Sigmoid colon (tissue), 7 donors: ENCODE measurements at regions of chr17 and their contacts with region 1.

Region 1: GRCh38 chr17:61700252-61700651 is 109.2 kb upstream of the NACA2 start:
- DNase-seq: no peak
- H3K4me3 ChIP-seq: no peak overlapping the region
- H3K27ac ChIP-seq: no peak overlapping the region
- H3K4me1 ChIP-seq: no peaks in the 10 kb centered on the region
- H3K27me3 ChIP-seq: no peaks in the 10 kb centered on the region
- CTCF ChIP-seq: no peak
- EP300 ChIP-seq: no peak
- POLR2A ChIP-seq: no peak

Region 2: DNA sequence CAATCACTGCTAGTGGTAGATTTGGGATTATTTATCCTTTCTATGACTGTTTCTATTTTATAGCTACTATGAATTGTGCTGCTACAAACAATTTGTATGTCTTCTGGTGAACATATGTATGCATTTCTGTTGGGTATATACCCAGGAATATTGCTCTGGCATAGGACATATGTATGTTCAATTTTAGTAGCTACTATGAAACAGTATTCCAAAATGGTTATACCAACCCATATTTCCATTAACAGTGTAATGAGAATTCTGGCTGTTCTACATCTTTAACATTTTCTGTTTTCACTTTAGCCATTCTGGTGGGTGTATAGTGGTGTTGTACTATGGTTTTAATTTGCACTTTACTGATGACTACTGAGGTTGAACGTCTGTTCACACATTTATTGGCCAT is 51.7 kb before region 1 on chr17:
- intact Hi-C with region 1: no loop called
- DNase-seq: no peak
- H3K4me3 ChIP-seq: no peak overlapping the region
- H3K27ac ChIP-seq: no peak overlapping the region
- H3K4me1 ChIP-seq: no peaks in the 10 kb centered on the region
- H3K27me3 ChIP-seq: no peaks in the 10 kb centered on the region
- CTCF ChIP-seq: no peak
- EP300 ChIP-seq: no peak
- POLR2A ChIP-seq: no peak

Region 3: GRCh38 chr17:61660728-61661485 is 39.3 kb before region 1 on chr17:
- intact Hi-C with region 1: no loop called
- DNase-seq: no peak
- H3K4me3 ChIP-seq: no peak overlapping the region
- H3K27ac ChIP-seq: no peak overlapping the region
- H3K4me1 ChIP-seq: no peaks in the 10 kb centered on the region
- H3K27me3 ChIP-seq: no peaks in the 10 kb centered on the region
- CTCF ChIP-seq: no peak
- EP300 ChIP-seq: no peak
- POLR2A ChIP-seq: no peak

Region 4: DNA sequence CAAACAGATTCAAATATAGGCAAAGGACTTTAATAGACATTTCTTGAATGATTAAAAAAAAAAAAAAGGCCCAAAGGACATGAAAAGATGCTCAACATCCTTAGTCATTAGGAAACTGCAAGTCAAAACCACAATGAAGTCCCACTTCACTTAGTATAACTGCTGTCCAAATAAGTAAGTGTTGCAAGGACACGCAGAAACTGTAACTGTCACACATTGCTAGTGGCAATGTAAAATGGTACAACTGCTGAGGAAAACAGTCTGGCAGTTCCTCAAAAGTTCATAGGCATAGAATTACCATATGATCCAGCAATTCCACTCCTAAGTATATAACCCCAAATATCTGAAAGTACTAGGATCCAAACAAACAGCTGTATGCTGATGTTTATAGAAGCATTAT is 50.4 kb after region 1 on chr17:
- intact Hi-C with region 1: loop called (anchors 10 kb)
- DNase-seq: no peak
- H3K4me3 ChIP-seq: no peak overlapping the region
- H3K27ac ChIP-seq: no peak overlapping the region
- H3K4me1 ChIP-seq: no peaks in the 10 kb centered on the region
- H3K27me3 ChIP-seq: no peaks in the 10 kb centered on the region
- CTCF ChIP-seq: no peak
- EP300 ChIP-seq: no peak
- POLR2A ChIP-seq: no peak